ENCODE measurements at regions of chr4 and their contacts with region 1.

Region 1: GRCh38 chr4:139499026-139499585 is 45.2 kb downstream of the RAB33B start:
- DNase-seq: no peak
- H3K4me3 ChIP-seq: no peak overlapping the region
- H3K27ac ChIP-seq: no peak overlapping the region
- H3K27me3 ChIP-seq: no peaks in the 10 kb centered on the region
- CTCF ChIP-seq: no peak

Region 2: GRCh38 chr4:138616775-138617174 is 882.3 kb before region 1 on chr4:
- intact Hi-C with region 1: no loop called
- DNase-seq: no peak
- H3K4me3 ChIP-seq: no peak overlapping the region
- H3K27ac ChIP-seq: no peak overlapping the region
- H3K27me3 ChIP-seq: no peaks in the 10 kb centered on the region
- CTCF ChIP-seq: no peak

Region 3: DNA sequence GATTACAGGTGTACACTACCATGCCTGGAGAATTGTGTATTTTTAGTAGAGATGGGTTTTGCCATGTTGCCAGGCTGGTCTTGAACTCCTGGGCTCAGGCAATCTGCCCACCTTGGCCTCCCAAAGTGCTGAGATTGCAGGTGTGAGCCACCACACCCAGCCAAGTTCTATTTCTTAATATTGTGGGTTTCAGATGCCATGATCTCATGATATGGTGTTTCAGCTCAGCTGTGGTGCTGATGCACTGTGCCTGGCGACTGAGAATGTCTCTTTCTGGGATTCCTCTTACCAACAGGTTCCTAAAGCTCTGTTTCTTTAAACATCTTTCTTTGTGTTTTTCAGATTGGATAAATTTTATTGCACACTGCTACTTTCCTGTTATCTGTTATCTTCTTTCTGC is 179.5 kb before region 1 on chr4:
- intact Hi-C with region 1: no loop called
- DNase-seq: no peak
- H3K4me3 ChIP-seq: no peak overlapping the region
- H3K27ac ChIP-seq: no peak overlapping the region
- H3K27me3 ChIP-seq: no peaks in the 10 kb centered on the region
- CTCF ChIP-seq: no peak

Region 4: DNA sequence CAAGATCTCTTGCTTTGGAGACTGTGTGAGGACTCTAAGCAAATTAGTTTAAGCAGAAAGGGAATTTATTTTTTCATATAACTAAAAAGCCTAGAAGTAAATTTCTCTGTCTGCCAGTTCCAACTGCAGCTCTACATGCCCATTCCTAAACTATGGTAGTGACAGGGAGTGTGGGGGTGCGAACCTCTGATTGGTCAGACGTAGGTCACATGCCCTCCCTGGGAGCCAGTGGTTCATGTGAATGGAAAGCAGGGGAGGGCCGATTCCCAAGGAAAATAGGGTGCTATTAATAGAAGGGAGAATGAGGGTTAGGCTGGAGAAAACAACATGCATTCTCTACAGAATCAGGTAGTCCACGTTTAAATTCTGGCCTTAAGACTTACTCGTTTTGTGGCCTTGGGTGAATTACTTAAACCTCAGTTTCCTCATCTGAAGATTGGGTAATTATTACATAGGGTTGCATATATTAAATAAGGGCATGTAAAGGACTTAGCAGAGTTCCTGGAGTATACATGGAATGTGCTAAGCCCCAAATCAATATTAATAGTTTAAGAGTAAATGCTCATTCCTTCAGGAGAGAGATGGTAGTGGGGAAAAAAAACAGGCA is 38.0 kb before region 1 on chr4:
- intact Hi-C with region 1: loop called in 1 of 2 experiments (anchors 5 kb)
- DNase-seq: no peak
- H3K4me3 ChIP-seq: no peak overlapping the region
- H3K27ac ChIP-seq: no peak overlapping the region
- H3K27me3 ChIP-seq: no peaks in the 10 kb centered on the region
- CTCF ChIP-seq: no peak

Region 5: GRCh38 chr4:139530833-139531427 is 31.8 kb after region 1 on chr4:
- intact Hi-C with region 1: loop called (anchors 2 to 5 kb)
- DNase-seq: peak in 3 of 10 donors; percentile 43 to 49 (median 47)
- H3K4me3 ChIP-seq: no peak overlapping the region
- H3K27ac ChIP-seq: peak overlapping the region in 3 of 59 donors; percentile 3 to 13 (median 6)
- H3K27me3 ChIP-seq: no peaks in the 10 kb centered on the region
- CTCF ChIP-seq: peak in 55 of 56 donors; percentile 29 to 76 (median 64)

Region 6: GRCh38 chr4:139603576-139604387 is 104.7 kb after region 1 on chr4:
- intact Hi-C with region 1: no loop called
- DNase-seq: peak in 2 of 10 donors; percentile 19 to 44
- H3K4me3 ChIP-seq: no peak overlapping the region
- H3K27ac ChIP-seq: no peak overlapping the region
- H3K27me3 ChIP-seq: no peaks in the 10 kb centered on the region
- CTCF ChIP-seq: peak; percentile 34 to 89 (median 70)

Region 7: DNA sequence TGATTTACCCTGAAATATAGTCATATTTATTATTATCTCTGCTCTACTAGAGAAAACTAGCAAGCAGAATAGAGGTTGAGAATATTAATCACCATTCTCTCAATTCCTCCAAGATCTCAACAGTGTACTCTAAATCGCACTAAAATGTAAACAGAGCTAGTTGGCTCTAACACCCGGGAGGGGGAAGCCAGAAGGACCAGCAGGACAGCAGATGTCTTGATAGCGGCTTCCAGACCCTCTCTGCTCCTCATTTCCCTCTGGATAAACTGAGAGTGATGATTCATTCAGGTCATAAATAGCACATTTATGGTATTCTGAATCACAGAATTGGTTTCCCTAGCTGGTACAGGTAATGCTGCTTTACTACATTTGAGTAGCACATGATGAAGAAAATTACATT is 1174.6 kb after region 1 on chr4:
- intact Hi-C with region 1: no loop called
- DNase-seq: peak in 1 of 10 donors; percentile 68
- H3K4me3 ChIP-seq: no peak overlapping the region
- H3K27ac ChIP-seq: peak overlapping the region in 1 of 59 donors; percentile 64
- H3K27me3 ChIP-seq: no peaks in the 10 kb centered on the region
- CTCF ChIP-seq: no peak

Measured in dorsolateral prefrontal cortex (tissue), 120 donors.